ENCODE measurements at regions of chr6 and their contacts with region 1.

Region 1: DNA sequence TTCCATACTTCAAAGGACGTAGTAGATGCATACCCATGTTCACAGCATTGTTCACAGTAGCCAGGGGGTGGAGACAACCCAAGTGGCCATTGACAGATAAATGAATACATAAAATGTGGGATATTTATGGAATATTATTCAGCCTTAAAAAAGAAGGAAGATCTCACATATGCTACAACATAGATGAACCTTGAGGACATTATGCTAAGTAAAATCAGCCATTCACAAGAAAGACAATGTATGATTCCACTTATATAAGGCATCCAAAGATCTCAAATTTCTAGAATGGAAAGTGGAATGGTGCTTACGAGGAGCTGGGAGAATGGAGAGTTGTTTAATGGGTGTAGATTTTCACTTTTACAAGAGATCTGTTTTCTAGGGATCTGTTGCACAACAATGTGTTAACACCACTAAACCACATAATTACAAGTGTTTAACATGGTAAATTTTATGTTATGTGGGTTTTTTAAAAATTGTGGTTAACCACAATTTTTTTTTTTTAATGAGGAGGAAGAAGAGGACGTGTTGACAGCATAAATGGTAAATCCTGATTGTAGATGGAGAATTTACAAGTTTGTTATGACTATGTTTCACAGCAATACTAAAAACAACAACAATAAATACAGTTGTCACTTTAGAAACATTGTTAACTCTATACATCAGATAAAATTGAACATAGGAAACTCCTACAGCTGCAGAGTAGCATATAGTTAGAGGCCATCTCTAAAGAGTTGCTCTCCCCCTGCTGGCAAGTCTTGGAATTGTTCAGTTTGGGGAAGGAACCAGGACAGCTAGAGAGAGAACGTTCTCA is 41.6 kb downstream of the CCN2 start:
- DNase-seq: peak; percentile 79
- H3K4me3 Mint-ChIP-seq: no peak overlapping the region
- H3K27ac Mint-ChIP-seq: no peak overlapping the region
- H3K4me1 Mint-ChIP-seq: peaks cover 6% of the 10 kb centered on the region
- H3K27me3 Mint-ChIP-seq: peaks cover 19% of the 10 kb centered on the region

Region 2: DNA sequence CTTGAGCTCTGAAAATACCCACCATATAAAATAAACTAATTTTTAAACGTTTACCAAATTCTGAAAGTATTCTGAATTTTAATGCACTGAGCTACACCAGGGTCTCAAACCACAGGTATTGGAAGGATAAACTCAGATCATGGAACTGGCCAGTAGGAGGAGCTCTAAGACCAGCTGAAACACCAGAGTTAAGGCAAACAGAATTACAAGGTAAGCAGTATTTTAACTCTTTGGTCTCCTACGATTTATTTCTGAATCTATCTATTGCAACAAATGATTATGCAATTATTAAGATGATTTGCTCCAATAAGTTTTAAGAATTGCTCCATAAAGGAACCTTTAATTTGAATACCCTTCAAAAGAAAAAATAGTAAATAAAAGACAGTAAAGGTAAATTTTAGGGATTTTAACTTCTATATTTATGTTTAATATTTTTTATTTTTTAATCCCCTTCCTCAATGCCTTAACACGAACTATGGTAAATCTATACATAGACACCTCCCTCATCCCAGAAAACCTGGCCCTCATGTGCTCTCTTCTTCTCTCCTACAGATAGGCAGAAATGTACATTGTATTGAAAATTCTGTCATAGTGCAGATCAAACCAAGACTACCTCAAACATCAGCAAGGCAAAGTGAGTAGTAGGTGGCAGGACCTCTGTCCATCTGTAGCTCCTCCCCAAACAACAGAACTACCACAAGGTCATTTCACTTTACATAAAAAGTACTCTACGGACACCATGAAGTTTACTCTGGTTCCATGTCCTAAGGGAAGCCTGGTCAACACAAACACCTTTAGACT is 1024.0 kb before region 1 on chr6:
- CTCF ChIA-PET with region 1: no interaction called
- POLR2A ChIA-PET with region 1: no interaction called
- intact Hi-C with region 1: loop called (anchors 5 kb)
- DNase-seq: peak; percentile 72
- H3K4me3 Mint-ChIP-seq: no peak overlapping the region
- H3K27ac Mint-ChIP-seq: no peak overlapping the region
- H3K4me1 Mint-ChIP-seq: no peaks in the 10 kb centered on the region
- H3K27me3 Mint-ChIP-seq: no peaks in the 10 kb centered on the region

Region 3: DNA sequence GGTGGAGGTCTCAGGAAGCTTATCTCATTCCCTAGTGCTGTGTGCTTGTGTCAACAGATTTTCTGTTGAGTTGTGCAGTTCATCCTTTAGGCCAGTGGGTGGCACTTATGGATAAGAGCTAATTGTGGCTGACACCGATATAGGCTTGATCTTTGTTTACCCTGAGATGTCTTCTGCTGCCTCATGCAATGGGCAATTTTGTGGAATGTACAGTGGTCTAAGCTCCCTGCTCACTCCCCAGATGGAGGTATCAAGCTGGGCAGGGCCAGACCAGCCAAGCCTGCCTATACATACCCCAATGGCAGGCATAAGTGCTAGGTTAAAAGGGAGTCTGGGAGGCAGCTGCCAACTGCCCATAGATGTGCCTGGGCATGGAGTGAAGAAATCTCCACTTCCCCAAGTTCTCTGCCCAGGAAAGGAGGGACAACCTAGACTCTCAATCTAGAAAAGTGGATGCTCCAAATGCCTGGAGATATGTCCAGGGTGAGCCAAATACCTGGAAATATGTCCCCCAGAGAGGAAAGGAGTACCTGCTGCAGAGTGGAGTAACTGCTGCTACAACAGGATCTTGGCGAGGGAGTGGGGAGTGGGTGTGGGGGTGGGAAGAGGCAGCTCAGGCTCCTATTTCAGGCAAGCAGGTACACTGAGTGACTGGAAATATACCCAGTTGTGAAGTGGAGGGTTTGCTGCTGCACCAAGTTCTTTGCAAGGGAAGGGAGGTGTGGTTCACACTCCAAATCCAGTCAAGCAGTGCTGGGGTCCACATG is 389.8 kb before region 1 on chr6:
- CTCF ChIA-PET with region 1: no interaction called
- POLR2A ChIA-PET with region 1: no interaction called
- intact Hi-C with region 1: loop called (anchors 1 kb)
- DNase-seq: peak; percentile 60
- H3K4me3 Mint-ChIP-seq: no peak overlapping the region
- H3K27ac Mint-ChIP-seq: no peak overlapping the region
- H3K4me1 Mint-ChIP-seq: peaks cover 12% of the 10 kb centered on the region
- H3K27me3 Mint-ChIP-seq: peaks cover 2% of the 10 kb centered on the region

Region 4: DNA sequence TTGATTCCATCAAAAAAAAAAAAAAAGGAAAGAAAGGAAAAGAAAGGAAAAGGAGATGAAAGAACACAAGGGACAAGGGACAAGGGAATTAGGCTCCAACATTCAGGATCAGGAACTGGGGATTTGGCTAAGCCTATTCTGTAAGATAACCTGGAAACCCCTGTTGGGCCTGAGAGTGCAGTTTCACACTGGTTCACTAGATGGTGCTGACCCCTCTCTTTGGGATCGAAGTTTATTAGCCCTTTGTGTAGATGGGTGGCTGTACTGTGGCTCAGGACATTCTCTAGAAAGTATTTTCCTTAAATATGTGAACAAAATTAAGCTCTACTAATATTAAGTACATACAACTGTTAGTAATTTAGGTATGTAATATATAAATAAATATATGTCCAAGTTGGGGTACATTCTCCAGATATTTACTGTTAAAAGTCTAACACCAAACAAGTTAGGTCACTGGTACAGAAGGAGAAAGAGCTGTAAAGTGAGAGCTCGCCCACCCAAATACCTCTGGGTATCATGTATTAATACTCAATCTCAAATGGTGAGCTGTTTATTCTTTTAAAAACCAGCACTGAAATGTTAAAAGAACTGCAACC is 214.7 kb before region 1 on chr6:
- CTCF ChIA-PET with region 1: interaction called, 42 read pairs
- POLR2A ChIA-PET with region 1: no interaction called
- intact Hi-C with region 1: loop called (anchors 1 kb)
- DNase-seq: peak; percentile 45
- H3K4me3 Mint-ChIP-seq: no peak overlapping the region
- H3K27ac Mint-ChIP-seq: no peak overlapping the region
- H3K4me1 Mint-ChIP-seq: no peaks in the 10 kb centered on the region
- H3K27me3 Mint-ChIP-seq: no peaks in the 10 kb centered on the region

Region 5: GRCh38 chr6:131782764-131783163 is 126.8 kb before region 1 on chr6:
- CTCF ChIA-PET with region 1: interaction called, 17 read pairs
- POLR2A ChIA-PET with region 1: no interaction called
- intact Hi-C with region 1: loop called (anchors 1 kb)
- DNase-seq: no peak
- H3K4me3 Mint-ChIP-seq: no peak overlapping the region
- H3K27ac Mint-ChIP-seq: no peak overlapping the region
- H3K4me1 Mint-ChIP-seq: no peaks in the 10 kb centered on the region
- H3K27me3 Mint-ChIP-seq: peaks cover 2% of the 10 kb centered on the region

Measured in activated CD4-positive, alpha-beta memory T cell treated with anti-CD3 and anti-CD28 coated beads for 36 hours (primary cell).